ENCODE measurements at regions of chr1 and their contacts with region 1.

Region 1: GRCh38 chr1:15592285-15592684 is 7.4 kb upstream of the AGMAT start:
- DNase-seq: no peak
- ATAC-seq: no peak
- H3K4me3 ChIP-seq: no peak overlapping the region
- H3K27ac ChIP-seq: no peak overlapping the region
- H3K4me1 ChIP-seq: no peaks in the 10 kb centered on the region
- H3K27me3 ChIP-seq: no peaks in the 10 kb centered on the region
- CTCF ChIP-seq: no peak
- POLR2A ChIP-seq: no peak
- RAD21 ChIP-seq: no peak

Region 2: DNA sequence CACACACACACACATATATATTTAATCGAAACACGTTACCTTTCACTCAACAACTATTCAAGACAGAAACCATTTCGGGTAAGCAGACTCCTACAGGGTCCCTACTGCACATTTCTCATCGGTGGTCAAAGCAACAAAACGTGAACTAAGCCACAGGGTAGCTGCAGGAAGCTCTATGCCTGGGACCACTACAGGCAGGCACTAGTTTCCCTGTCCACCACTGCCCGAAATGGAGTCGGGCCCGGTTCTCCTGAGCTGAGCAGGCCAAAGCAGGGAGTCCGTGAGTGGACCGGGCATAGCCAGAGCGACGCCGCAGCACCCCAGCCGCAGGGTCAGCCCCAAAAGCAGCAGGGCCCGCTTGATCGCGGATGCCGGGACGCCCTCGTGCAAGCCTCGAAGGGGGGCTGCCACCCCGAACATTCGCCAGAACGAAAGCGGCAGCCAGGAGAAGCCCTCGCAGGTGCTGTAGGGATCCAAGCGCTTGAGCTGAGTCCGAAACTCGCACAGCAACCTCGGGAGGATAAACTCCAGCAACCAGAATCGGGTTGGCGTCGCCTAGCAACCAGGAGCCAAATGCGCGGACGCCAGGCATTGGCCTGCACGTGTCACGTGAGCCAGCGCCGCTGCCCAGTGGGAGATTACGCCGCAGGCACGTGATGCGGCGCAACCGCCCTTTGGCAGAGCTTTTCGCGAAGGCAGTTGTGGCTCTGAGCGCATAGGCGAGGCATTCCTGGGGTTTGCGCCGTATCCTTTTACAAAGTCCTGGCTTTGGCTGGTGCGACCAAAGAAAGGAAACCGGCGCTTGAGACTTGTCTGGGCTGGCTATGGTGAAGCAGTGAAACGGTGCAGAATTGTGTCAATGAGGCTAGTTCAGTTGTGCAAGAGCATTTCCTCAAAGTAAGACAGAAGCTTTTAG is 11.0 kb after region 1 on chr1:
- CTCF ChIA-PET with region 1: no interaction called
- POLR2A ChIA-PET with region 1: no interaction called
- RAD21 ChIA-PET with region 1: no interaction called
- intact Hi-C with region 1: no loop called
- DNase-seq: no peak
- ATAC-seq: no peak
- H3K4me3 ChIP-seq: no peak overlapping the region
- H3K27ac ChIP-seq: no peak overlapping the region
- H3K4me1 ChIP-seq: no peaks in the 10 kb centered on the region
- H3K27me3 ChIP-seq: no peaks in the 10 kb centered on the region
- CTCF ChIP-seq: no peak
- POLR2A ChIP-seq: no peak
- RAD21 ChIP-seq: no peak

Region 3: GRCh38 chr1:15741183-15741850 is 149.0 kb after region 1 on chr1:
- CTCF ChIA-PET with region 1: interaction called, 13 read pairs
- POLR2A ChIA-PET with region 1: no interaction called
- RAD21 ChIA-PET with region 1: interaction called in 1 of 2 experiments, 5 read pairs
- intact Hi-C with region 1: loop called (anchors 1 kb)
- DNase-seq: peak; percentile 53
- ATAC-seq: peak; percentile 98
- H3K4me3 ChIP-seq: no peak overlapping the region
- H3K27ac ChIP-seq: no peak overlapping the region
- H3K4me1 ChIP-seq: peaks cover 3 to 10% of the 10 kb centered on the region in 2 experiments; a peak in 3 of 4 replicates
- H3K27me3 ChIP-seq: no peaks in the 10 kb centered on the region
- CTCF ChIP-seq: peak; percentile 91 to 95 (median 93)
- POLR2A ChIP-seq: no peak
- RAD21 ChIP-seq: peak; percentile 99